Pancreas (tissue), 10 donors: ENCODE measurements at regions of chr6 and their contacts with region 1.

Region 1: DNA sequence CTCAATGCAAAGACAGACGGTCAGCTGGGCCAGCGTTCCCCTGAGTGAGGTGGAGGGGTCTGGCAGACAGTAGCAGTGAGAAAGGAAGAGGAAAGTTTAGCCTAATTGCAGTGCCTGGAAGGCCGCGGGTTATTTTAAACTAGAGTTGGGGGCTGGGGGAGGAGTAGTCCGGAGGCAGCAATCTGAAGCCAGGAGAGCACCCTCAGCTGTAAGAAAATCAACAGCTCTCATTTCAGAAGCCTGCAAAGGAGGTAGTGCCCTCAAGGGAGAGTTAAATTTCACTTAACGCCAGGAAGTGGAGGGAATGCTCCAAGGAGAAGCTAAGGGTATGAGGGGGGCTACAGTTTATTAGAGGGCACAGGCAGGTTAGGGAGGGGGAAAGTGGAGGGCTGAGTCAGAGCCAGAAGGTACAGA is 26.9 kb downstream of the RING1 start:
- DNase-seq: no peak
- ATAC-seq: no peak
- H3K4me3 ChIP-seq: no peak overlapping the region
- H3K27ac ChIP-seq: no peak overlapping the region
- H3K4me1 ChIP-seq: no peaks in the 10 kb centered on the region
- H3K27me3 ChIP-seq: no peaks in the 10 kb centered on the region
- CTCF ChIP-seq: no peak

Region 2: GRCh38 chr6:32974016-32974333 is 261.3 kb before region 1 on chr6:
- intact Hi-C with region 1: no loop called
- DNase-seq: no peak
- ATAC-seq: no peak
- H3K4me3 ChIP-seq: peak overlapping the region; percentile 87 to 98 (median 95)
- H3K27ac ChIP-seq: peak overlapping the region in 1 of 4 donors; percentile 99
- H3K4me1 ChIP-seq: peaks cover 7 to 29% (median 13%) of the 10 kb centered on the region in 3 donors
- H3K27me3 ChIP-seq: no peaks in the 10 kb centered on the region
- CTCF ChIP-seq: no peak

Region 3: GRCh38 chr6:33008944-33009861 is 226.0 kb before region 1 on chr6 and contains the start of gene HLA-DOA:
- intact Hi-C with region 1: loop called in 1 of 3 experiments (anchors 10 kb)
- DNase-seq: no peak
- ATAC-seq: peak in 3 of 4 donors; percentile 44 to 87 (median 58)
- H3K4me3 ChIP-seq: peak within 1 kb of the TSS in 1 of 4 donors; percentile 9
- H3K27ac ChIP-seq: peak within 1 kb of the TSS in 1 of 4 donors; percentile 48
- H3K4me1 ChIP-seq: no peaks in the 10 kb centered on the region
- H3K27me3 ChIP-seq: no peaks in the 10 kb centered on the region
- CTCF ChIP-seq: no peak
- total RNA-seq, gene HLA-DOA: 0.60 to 16.5 (median 2.2) TPM

Region 4: GRCh38 chr6:33091957-33092356 is 143.3 kb before region 1 on chr6:
- intact Hi-C with region 1: no loop called
- DNase-seq: peak in 3 of 6 donors; percentile 24 to 74 (median 43)
- ATAC-seq: peak in 3 of 4 donors; percentile 74 to 84 (median 77)
- H3K4me3 ChIP-seq: no peak overlapping the region
- H3K27ac ChIP-seq: no peak overlapping the region
- H3K4me1 ChIP-seq: no peaks in the 10 kb centered on the region
- H3K27me3 ChIP-seq: no peaks in the 10 kb centered on the region
- CTCF ChIP-seq: peak; percentile 16 to 46 (median 36)

Region 5: DNA sequence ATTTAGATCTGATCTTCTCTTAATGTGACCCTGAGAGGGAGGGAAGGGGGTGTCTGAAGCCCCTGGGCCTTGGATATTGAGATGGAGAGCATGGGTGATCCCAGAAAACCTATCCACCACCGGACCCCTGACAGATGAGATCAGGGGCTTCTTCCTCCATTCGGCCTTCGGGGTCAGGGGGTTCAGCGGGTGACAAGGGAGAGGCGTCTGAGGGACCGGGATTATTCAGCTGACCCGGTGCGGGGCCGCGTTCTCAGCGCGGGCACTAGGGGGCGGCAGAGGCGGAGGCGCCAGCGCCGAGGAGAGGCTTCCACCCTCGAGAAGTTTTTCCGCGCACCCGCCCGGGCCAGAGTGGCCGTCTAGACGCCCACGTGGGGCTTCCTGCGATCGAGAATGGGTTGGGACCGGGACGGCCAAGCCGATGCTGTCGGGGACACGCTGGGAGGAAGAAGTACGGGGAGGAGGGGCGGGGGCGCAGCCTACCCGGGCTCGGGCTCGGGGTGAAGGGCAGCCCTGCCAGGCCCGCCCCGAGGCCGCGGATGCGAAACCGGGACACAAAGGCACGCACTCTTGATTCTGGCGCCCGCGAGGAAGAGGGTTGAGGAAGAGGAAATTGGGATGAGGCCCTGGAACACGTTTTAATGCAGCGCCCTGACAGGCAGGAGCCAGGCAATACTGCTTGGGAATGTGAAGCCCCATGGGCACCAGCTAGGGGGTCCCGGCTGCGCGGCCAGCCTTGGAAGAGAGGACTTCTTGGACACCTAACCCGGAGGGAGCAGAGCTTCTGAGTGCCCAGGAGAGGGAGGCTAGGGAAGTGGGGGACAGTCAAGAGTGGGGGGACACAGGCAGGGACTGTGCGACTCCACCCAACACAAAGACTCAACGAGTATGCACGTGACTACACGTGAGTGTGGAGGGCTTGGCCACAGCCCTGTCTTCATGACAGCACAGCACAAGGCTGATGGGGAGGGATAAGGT is 73.6 kb before region 1 on chr6:
- intact Hi-C with region 1: loop called in 1 of 3 experiments (anchors 10 kb)
- DNase-seq: peak; percentile 71 to 95 (median 83)
- ATAC-seq: peak; percentile 96 to 98 (median 98)
- H3K4me3 ChIP-seq: peak overlapping the region; percentile 36 to 48 (median 42)
- H3K27ac ChIP-seq: no peak overlapping the region
- H3K4me1 ChIP-seq: no peaks in the 10 kb centered on the region
- H3K27me3 ChIP-seq: no peaks in the 10 kb centered on the region
- CTCF ChIP-seq: peak; percentile 90 to 96 (median 93)

Region 6: DNA sequence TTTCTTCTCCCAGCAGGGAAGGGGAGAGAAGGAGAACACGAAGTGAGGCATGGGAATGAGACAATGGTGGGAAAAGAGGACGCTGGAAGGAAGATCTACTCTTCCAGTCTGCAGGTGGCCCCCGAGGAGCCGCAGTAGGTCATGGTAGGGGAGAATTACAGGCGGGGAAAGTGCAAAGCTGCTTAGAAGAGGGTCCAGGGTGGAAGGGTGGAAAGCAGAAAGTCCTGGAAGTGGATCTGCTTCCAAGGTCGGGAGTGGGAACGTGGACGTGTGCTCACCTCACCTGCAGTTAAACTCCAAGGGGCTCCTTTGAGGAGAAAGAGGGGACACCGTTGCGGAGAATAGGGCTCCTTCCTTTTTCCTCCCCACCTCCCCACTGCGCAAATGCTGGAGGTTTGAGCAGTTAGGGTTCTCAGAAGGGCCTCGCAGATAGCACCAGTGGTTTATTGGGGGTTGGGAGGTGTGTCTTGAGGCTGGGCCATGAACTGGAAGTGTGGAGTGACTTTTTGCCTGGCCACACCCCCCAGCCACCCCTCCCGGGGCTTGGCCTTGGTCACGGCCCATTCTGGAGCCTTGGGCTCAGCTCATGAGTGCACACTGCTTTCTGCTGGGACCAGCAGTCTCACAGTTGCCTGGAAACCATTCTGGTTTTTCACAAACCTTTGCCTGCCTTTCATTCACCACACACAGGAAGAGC is 669.0 kb after region 1 on chr6:
- intact Hi-C with region 1: no loop called
- DNase-seq: peak in 1 of 6 donors; percentile 17
- ATAC-seq: peak; percentile 35 to 77 (median 64)
- H3K4me3 ChIP-seq: no peak overlapping the region
- H3K27ac ChIP-seq: no peak overlapping the region
- H3K4me1 ChIP-seq: peaks cover 0 to 6% (median 0%) of the 10 kb centered on the region in 3 donors
- H3K27me3 ChIP-seq: no peaks in the 10 kb centered on the region
- CTCF ChIP-seq: no peak